Common myeloid progenitor, CD34-positive (primary cell): ENCODE measurements at regions of chr4 and their contacts with region 1.

Region 1: GRCh38 chr4:83284193-83285054 is at the start of gene COQ2:
- DNase-seq: peak; percentile 95
- H3K4me3 ChIP-seq: peak within 1 kb of the TSS; percentile 68 to 88 (median 84)
- H3K27ac ChIP-seq: peak within 1 kb of the TSS; percentile 94 to 96
- H3K4me1 ChIP-seq: peaks cover 19 to 51% (median 39%) of the 10 kb centered on the region in 4 experiments
- H3K27me3 ChIP-seq: no peaks in the 10 kb centered on the region

Region 2: DNA sequence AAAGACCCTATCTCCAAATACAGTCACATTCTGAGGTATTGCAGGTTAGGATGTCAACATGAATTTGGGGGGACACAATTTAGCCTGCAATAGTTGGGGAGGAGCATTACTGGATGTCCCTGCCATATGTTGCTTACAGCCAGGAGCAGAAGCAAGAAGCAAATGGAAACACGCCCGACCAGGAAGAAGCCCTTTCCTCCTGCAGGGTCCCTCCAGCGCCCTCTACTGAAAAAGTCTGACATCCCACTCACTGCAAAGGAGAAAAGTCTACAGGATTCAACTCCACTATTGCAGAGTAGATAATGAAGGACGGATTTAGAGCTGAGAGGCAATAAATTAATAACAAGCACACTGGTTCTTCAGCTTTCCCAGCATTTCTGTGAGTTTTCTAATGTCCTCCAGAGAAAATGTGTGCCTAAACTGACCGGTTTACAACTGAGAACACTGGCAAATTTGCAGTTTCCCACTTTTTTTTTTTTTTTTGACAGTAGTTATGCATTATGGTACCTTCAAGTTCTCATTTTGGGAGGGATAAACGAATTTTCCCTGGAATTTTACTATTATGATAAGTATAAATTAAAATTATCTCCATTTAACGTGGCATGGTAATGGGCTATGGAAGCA is 31.5 kb before region 1 on chr4:
- CTCF ChIA-PET with region 1: interaction called, 18 read pairs
- POLR2A ChIA-PET with region 1: no interaction called
- DNase-seq: peak; percentile 80 to 90 (median 86)
- H3K4me3 ChIP-seq: no peak overlapping the region
- H3K27ac ChIP-seq: no peak overlapping the region
- H3K4me1 ChIP-seq: peaks cover 0 to 11% (median 5%) of the 10 kb centered on the region in 4 experiments
- H3K27me3 ChIP-seq: no peaks in the 10 kb centered on the region

Region 3: GRCh38 chr4:83267121-83267829 is 17.1 kb before region 1 on chr4:
- CTCF ChIA-PET with region 1: interaction called, 28 read pairs
- POLR2A ChIA-PET with region 1: no interaction called
- DNase-seq: no peak
- H3K4me3 ChIP-seq: peak overlapping the region in 1 of 7 experiments; percentile 8
- H3K27ac ChIP-seq: no peak overlapping the region
- H3K4me1 ChIP-seq: peaks cover 4 to 25% (median 12%) of the 10 kb centered on the region in 4 experiments
- H3K27me3 ChIP-seq: no peaks in the 10 kb centered on the region

Region 4: DNA sequence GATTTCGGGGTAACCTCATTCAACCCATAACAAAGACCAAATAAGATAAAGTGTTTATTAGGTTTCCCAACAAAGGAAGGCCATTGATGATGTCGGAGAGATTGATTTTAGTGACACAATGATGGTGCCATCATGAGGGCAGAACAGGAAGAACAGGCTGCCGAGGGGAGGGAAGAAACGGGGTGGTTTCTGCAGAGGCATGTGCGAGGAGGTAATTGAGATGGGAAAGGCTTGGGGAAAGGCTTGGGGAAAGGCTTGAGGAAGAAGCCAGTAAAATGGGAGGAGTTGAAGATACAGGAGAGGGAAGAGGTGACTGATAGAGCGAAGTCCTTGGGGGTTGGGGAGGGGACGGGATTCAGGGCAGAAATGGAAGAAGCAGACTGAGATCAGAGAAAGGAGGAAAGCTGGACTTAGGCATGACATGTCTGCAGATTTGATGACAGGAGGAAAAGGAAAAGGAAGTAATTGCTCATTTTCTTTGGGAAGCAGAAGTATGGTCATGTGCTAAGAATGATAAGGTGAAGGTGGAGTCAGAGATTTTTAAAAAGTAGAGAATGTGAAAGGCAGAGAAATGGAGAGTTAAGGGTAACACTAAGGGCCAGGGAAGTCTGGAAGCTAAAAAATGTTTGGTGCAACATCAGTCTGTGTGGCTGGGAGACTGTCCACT is 44.2 kb after region 1 on chr4:
- CTCF ChIA-PET with region 1: interaction called, 20 read pairs
- POLR2A ChIA-PET with region 1: interaction called, 6 read pairs
- DNase-seq: peak in 1 of 3 donors; percentile 37
- H3K4me3 ChIP-seq: no peak overlapping the region
- H3K27ac ChIP-seq: no peak overlapping the region
- H3K4me1 ChIP-seq: peaks cover 0 to 32% (median 20%) of the 10 kb centered on the region in 4 experiments
- H3K27me3 ChIP-seq: no peaks in the 10 kb centered on the region

Region 5: GRCh38 chr4:83362492-83363329 is 78.3 kb after region 1 on chr4:
- CTCF ChIA-PET with region 1: interaction called, 14 read pairs
- POLR2A ChIA-PET with region 1: no interaction called
- DNase-seq: peak; percentile 48 to 68 (median 68)
- H3K4me3 ChIP-seq: no peak overlapping the region
- H3K27ac ChIP-seq: no peak overlapping the region
- H3K4me1 ChIP-seq: peaks cover 0 to 22% (median 15%) of the 10 kb centered on the region in 4 experiments
- H3K27me3 ChIP-seq: no peaks in the 10 kb centered on the region